AG04449 (cell line): ENCODE measurements at regions of chr7 and their contacts with region 1.

Region 1: DNA sequence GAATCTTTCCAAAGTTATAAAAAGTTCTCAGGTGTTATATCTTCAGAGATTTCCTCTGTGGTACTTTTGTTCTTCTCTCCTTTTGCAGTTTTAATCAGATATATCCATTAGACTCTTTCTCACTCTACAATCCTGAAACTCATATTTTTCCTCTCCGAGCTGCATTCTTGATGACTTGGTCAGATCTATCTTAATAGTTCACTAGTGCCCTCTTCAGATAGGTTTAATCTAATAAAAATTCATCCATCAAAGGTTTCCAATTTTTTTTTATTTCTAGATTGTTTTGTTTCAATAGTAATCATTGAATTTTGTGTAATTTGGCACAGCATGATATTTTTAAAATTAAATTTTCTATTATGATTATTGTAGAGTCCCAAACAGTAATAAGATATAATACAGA is 21.8 kb upstream of the DGKB start:
- DNase-seq: no peak
- H3K4me3 ChIP-seq: no peak overlapping the region
- CTCF ChIP-seq: no peak

Region 2: DNA sequence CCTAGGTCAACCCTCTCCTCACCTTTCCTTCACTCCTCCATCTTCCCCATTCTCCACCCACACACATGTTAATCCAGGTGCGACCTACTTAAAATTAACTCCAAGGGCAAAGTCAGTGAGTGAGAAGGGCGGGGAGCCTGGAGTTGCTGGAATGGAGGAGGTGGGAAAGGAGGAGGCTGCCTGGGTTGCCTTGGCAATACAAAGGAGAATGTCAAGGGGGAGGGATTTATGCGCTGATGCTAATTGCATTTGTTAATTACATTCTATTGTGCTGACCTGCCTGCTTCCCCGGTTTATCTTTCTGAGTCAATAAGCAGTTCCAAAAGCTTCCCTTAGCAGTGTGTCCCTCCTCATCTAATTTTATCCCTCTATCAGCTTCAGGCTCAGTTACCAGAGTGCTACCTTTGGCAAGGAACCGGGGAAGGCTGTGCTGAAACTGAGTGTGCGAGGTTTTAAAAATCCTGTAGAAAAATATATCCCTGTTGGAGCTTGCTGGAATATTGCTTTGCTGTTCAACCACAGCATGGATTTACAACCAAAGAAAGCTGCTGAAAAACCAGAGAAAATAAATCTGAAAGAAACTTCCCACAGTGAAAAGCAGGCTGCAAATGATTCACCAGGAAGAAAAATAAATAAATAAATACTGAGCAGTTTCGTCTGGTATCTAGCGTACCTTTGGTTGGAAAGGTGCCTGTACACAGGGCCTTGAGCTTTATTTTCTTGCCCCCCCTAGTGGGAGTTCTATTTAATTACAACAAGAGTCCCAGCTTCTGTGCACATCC is 91.3 kb after region 1 on chr7:
- CTCF ChIA-PET with region 1: interaction called, 13 read pairs
- POLR2A ChIA-PET with region 1: no interaction called
- DNase-seq: no peak
- H3K4me3 ChIP-seq: peak overlapping the region; percentile 21
- CTCF ChIP-seq: peak; percentile 42